ENCODE measurements at regions of chr14 and their contacts with region 1.

Region 1: DNA sequence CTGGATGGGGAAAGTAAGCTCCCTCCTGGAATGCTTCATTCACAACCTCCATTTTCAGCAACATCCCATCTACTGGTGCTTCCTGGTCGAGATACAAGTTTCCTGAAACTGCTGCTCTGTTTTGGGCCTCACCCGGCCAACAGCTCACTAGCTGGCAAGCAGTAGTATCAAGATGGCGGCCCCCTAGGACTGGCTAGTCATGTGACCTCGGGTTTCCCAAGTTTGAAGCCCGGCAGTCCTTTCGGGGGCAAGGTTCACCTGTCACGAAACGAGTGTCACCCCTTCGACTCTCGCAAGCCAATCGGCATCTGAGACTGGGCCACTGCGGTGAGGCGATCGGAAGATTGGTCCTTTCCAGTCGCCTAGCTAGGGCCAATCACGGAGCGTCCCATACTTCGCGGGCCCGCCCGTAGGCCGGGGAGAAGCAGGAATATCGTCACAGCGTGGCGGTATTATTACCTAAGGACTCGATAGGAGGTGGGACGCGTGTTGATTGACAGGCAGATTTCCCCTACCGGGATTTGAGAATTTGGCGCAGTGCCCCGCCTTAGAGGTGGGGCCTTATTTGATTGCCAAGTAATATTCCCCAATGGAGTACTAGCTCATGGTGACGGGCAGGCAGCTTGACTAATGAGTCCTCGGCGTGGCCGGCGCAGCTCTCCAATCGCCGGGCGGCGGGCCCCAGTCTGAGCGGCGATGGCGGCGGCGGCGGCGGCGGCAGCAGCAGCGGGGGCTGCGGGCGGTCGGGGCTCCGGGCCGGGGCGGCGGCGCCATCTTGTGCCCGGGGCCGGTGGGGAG is at the start of gene PABPN1:
- DNase-seq: peak; percentile 99
- H3K4me3 Mint-ChIP-seq: peak within 1 kb of the TSS; percentile 94
- H3K27ac Mint-ChIP-seq: peak within 1 kb of the TSS; percentile 96
- H3K4me1 Mint-ChIP-seq: peaks cover 18% of the 10 kb centered on the region
- H3K27me3 Mint-ChIP-seq: no peaks in the 10 kb centered on the region
- total RNA-seq, gene PABPN1: 194 to 204 TPM

Region 2: GRCh38 chr14:22766456-22767322 is 554.3 kb before region 1 on chr14 and contains the start of gene OXA1L:
- CTCF ChIA-PET with region 1: no interaction called
- intact Hi-C with region 1: loop called (anchors 1 kb)
- DNase-seq: peak; percentile 99
- H3K4me3 Mint-ChIP-seq: peak within 1 kb of the TSS; percentile 83
- H3K27ac Mint-ChIP-seq: peak within 1 kb of the TSS; percentile 95
- H3K4me1 Mint-ChIP-seq: peaks cover 31% of the 10 kb centered on the region
- H3K27me3 Mint-ChIP-seq: no peaks in the 10 kb centered on the region
- total RNA-seq, gene OXA1L: 149 to 152 TPM

Region 3: DNA sequence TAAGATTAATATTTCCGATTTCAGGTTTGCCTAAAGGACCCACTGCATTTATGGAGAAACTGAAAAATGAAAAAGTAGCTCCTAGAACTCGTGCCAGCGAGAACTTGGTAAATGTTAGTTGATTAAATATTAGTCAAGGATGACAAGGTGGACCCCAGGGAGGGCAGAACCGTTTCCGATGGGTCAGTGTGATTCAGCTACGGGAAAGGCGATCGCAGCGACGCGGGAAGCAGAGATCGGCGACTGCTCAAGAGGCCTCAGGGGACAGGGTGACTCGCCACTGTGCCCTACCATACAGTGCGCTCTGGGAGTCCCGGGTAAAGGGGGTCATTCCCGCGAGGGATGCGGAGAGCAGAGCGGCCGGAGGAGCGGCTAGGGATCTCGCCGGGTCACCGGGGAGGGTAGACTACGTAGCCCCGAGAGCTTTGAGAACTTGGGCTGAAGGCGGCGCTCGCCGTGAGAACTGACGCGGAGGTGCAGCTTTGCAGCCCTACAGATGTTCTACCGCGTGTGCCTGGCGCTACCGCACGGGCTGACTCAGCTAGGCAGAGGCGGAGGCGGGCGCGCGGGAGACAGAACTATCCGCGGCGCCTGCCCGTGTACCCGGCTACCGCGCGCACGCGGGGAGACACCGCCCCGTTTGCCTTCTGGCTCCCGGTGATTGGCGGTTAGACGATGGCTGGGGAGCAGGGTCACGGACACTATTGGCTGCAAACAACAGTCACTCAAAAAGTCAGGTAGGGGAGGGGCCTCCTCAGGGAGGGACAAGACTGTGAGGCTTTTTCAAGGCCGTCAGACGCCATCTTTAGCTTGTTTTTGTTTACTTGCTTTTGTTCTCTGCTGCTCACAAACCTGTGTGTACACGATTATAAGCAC is 314.2 kb before region 1 on chr14:
- CTCF ChIA-PET with region 1: no interaction called
- intact Hi-C with region 1: no loop called
- DNase-seq: peak; percentile 99
- H3K4me3 Mint-ChIP-seq: peak overlapping the region; percentile 96
- H3K27ac Mint-ChIP-seq: peak overlapping the region; percentile 98
- H3K4me1 Mint-ChIP-seq: peaks cover 36% of the 10 kb centered on the region
- H3K27me3 Mint-ChIP-seq: no peaks in the 10 kb centered on the region

Region 4: DNA sequence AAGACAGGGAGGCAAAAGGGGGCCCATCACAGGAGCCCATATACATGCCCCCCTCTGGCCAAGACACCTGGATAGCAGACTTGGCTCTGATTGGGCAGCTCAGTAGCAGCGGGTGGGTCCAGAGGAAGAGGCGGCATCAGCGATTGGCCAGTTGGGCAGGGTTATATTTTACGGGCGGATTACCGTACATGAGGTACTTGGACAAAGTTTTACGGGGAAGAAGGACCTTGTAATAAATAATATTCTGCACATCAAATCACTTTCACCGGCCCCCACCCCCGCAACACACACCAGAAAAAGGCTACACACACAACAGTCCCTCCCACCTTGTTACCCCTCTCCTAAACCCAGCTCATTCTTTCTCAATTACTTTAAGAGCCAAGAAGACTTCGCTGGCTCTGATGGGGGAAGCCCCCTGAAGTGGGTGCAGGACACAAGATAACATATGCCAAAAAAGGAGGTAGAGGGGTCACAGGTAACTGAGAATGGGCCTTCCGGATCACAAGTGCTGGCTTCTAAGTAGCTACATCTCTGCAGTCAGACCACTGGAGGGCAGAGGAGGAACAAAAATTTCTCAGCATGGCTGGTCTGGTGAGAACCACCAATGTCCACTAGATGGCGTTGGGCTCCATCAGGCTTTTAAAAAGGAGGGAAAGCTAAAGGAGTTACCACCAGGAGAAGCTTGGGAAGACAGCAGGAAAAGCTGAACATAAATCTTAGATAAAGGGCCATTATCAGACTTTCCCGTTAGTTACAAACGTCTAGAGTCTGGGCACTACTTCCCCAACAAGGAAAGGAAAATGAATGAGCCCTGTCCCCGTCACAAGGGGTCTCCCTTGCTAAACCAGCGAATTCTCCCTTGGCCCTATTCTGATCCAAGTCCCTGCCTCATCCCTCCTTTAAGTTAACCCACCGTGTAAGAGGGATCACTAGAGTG is 252.2 kb before region 1 on chr14:
- CTCF ChIA-PET with region 1: interaction called, 5 read pairs
- intact Hi-C with region 1: loop called (anchors 1 kb)
- DNase-seq: peak; percentile 88
- H3K4me3 Mint-ChIP-seq: peak overlapping the region; percentile 15
- H3K27ac Mint-ChIP-seq: peak overlapping the region; percentile 30
- H3K4me1 Mint-ChIP-seq: peaks cover 41% of the 10 kb centered on the region
- H3K27me3 Mint-ChIP-seq: no peaks in the 10 kb centered on the region

Region 5: DNA sequence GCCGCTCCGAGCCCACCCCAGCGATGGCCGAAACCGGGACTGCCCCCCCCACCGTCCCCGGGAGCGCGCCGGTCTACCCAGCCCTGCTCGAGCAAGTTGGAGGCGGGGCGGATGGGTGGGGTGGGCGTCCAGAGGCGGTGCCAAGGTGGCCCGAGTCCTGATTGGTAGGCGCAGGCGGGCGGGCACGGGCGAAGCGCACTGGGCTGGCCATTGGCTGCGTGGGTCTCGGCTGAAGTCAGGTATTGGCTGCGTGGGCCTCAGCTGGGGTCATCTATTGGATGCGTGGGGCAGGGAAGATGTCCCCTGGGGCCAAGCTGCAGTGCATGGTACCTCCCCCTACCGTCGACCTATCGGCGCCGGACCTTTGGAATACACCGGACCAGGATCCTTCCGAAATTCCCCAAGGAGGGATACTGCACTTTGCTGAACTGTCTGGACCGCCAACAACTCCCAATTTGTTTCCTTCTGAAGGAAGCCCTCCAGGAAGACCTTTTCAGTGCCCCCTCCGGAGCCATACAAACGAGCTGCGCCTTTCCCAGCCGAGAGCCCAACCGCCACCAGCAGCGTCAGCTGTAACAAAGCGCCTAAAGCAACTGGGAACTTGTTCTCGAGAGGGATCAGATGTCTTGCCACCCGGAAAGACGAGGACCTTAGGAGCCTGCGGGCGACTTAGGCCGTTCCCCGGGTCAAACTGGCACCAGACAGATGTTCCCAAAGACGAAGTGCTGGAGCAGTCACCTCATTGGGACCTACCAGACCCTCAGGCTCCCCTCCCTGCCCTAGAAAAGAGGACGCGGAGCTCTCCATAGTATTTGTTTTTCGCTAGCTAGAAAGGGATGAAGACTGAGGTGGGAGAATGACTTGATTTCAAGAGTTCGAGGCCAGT is 34.7 kb before region 1 on chr14 and contains the start of gene HOMEZ:
- CTCF ChIA-PET with region 1: interaction called, 5 read pairs
- intact Hi-C with region 1: loop called (anchors 1 kb)
- DNase-seq: peak; percentile 99
- H3K4me3 Mint-ChIP-seq: peak within 1 kb of the TSS; percentile 99
- H3K27ac Mint-ChIP-seq: peak within 1 kb of the TSS; percentile 96
- H3K4me1 Mint-ChIP-seq: peaks cover 29% of the 10 kb centered on the region
- H3K27me3 Mint-ChIP-seq: no peaks in the 10 kb centered on the region
- total RNA-seq, gene HOMEZ: 6.3 to 7.8 TPM

Region 6: DNA sequence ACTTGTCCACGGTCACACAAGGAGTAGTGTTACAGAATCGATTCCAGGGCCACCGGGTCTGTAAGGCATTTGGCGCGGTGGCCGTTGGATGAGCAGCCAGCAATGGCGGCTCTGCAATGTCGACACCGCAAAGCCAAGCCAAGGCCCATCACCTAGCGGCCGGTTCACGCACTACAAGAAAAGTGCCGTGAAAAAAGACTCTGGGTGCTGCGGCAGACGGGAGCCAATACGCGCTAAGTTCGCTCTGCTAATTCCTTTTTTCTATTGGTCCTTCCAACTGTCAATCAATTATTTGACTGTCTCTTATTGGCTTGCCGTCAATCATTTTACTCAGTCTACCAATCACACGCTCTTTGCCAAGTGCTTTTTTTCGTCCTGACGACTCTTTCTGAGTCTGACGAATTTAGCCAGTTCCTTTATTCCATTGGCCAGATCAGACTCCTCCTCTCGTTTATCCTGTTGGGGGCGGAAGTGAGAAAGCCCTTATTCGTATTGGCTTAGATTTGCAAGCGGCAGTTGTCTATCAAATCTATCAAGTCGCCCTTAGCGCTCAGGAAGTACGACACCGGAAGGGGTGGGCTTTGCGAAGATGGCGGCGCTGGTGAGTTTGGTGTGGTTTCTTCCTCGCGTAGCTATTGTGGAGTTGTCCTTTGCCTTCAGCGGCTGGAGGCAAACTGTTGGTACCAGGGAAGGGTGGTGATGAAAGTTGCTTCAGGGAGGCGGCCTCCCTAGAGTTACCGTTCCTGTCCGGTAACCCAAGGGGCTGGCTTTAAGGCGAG is 148.3 kb after region 1 on chr14 and contains the start of gene NGDN:
- CTCF ChIA-PET with region 1: interaction called, 3 read pairs
- intact Hi-C with region 1: loop called (anchors 1 kb)
- DNase-seq: peak; percentile 96
- H3K4me3 Mint-ChIP-seq: no peak within 1 kb of the TSS
- H3K27ac Mint-ChIP-seq: no peak within 1 kb of the TSS
- H3K4me1 Mint-ChIP-seq: peaks cover 11% of the 10 kb centered on the region
- H3K27me3 Mint-ChIP-seq: no peaks in the 10 kb centered on the region
- total RNA-seq, gene NGDN: 38.9 to 40.8 TPM

Region 7: GRCh38 chr14:24141097-24141880 is 820.3 kb after region 1 on chr14 and contains the start of gene EMC9:
- CTCF ChIA-PET with region 1: no interaction called
- intact Hi-C with region 1: loop called (anchors 1 kb)
- DNase-seq: peak; percentile 100
- H3K4me3 Mint-ChIP-seq: peak within 1 kb of the TSS; percentile 99
- H3K27ac Mint-ChIP-seq: peak within 1 kb of the TSS; percentile 93
- H3K4me1 Mint-ChIP-seq: peaks cover 73% of the 10 kb centered on the region
- H3K27me3 Mint-ChIP-seq: no peaks in the 10 kb centered on the region
- total RNA-seq, gene EMC9: 38.4 to 38.9 TPM